Activated CD4-positive, alpha-beta T cell treated with anti-CD3 and anti-CD28 coated beads for 36 hours (primary cell): ENCODE measurements at regions of chr7 and their contacts with region 1.

Region 1: GRCh38 chr7:116809636-116810266 is 52.6 kb upstream of the CAPZA2 start:
- DNase-seq: no peak
- ATAC-seq: peak; percentile 69
- H3K4me3 Mint-ChIP-seq: no peak overlapping the region
- H3K27ac Mint-ChIP-seq: no peak overlapping the region
- H3K4me1 Mint-ChIP-seq: no peaks in the 10 kb centered on the region
- H3K27me3 Mint-ChIP-seq: peaks cover 3% of the 10 kb centered on the region

Region 2: DNA sequence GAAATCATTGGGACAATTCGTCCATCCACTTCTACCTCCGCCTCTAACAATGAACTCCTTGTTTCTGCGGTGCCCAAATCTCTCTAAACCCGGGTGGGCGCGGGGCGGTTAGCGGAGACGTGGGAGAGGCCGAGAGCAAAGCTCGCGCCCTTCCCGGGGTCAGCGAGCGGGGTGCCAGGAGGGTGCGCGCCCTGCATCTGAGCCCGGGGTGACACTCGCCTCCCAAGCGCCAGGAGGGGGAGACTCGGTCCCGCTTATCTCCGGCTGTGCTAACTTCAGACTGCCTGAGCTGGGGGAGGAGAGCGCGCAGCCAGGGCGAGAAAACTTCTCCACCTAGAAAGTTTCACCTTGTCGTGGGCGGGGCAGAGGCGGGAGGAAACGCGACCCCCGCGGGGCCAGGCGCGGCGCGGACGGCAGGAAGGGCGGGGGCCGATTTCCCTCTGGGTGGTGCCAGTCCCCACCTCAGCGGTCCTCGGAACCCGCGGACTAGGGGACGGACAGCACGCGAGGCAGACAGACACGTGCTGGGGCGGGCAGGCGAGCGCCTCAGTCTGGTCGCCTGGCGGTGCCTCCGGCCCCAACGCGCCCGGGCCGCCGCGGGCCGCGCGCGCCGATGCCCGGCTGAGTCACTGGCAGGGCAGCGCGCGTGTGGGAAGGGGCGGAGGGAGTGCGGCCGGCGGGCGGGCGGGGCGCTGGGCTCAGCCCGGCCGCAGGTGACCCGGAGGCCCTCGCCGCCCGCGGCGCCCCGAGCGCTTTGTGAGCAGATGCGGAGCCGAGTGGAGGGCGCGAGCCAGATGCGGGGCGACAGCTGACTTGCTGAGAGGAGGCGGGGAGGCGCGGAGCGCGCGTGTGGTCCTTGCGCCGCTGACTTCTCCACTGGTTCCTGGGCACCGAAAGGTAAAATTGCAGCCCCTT is 137.8 kb before region 1 on chr7 and contains the start of gene MET:
- CTCF ChIA-PET with region 1: interaction called, 3 read pairs
- POLR2A ChIA-PET with region 1: no interaction called
- intact Hi-C with region 1: loop called (anchors 1 to 2 kb)
- DNase-seq: peak; percentile 82
- ATAC-seq: peak; percentile 97
- H3K4me3 Mint-ChIP-seq: peak within 1 kb of the TSS; percentile 46
- H3K27ac Mint-ChIP-seq: no peak within 1 kb of the TSS
- H3K4me1 Mint-ChIP-seq: peaks cover 7% of the 10 kb centered on the region
- H3K27me3 Mint-ChIP-seq: peaks cover 47% of the 10 kb centered on the region
- total RNA-seq, gene MET: 0.63 to 0.91 TPM

Region 3: DNA sequence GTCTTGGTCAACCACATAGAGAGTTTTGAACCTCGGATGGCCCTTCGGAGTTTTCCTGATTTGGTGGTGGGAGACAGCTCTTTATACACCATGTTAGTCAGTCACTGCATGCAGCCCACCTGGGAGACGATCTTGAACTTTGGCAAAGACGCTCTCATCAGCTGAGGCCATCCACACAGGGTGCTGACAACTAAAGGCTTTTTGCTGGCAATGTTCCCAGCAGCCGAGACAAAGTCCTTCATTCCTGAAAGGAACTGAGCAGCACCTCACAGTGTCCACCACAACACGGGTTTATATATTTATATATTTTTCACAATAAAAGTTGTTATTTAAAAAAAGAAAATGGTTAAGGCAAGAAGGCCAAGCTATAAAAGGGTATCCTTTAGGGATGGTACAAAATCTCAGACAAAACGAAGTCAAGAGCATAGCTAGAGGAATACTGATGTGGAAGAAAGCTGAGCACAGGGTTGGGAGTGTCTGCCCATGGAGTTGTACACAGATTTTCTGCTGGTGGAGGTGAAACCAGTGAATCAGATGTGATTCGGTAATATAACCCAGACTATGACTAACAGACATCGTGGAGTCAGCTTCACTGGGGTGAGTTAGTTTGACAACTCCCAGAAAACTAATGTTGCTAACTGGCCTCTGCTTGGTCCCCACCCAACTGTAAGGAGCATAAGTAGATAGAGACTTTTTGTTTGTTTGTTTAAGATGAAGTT is 25.2 kb after region 1 on chr7:
- CTCF ChIA-PET with region 1: no interaction called
- POLR2A ChIA-PET with region 1: no interaction called
- intact Hi-C with region 1: loop called in 1 of 2 experiments (anchors 2 kb)
- DNase-seq: no peak
- ATAC-seq: peak; percentile 74
- H3K4me3 Mint-ChIP-seq: no peak overlapping the region
- H3K27ac Mint-ChIP-seq: no peak overlapping the region
- H3K4me1 Mint-ChIP-seq: no peaks in the 10 kb centered on the region
- H3K27me3 Mint-ChIP-seq: peaks cover 2% of the 10 kb centered on the region

Region 4: GRCh38 chr7:116871061-116871700 is 61.4 kb after region 1 on chr7:
- CTCF ChIA-PET with region 1: no interaction called
- POLR2A ChIA-PET with region 1: no interaction called
- intact Hi-C with region 1: no loop called
- DNase-seq: no peak
- ATAC-seq: no peak
- H3K4me3 Mint-ChIP-seq: no peak overlapping the region
- H3K27ac Mint-ChIP-seq: peak overlapping the region; percentile 84
- H3K4me1 Mint-ChIP-seq: peaks cover 76% of the 10 kb centered on the region
- H3K27me3 Mint-ChIP-seq: no peaks in the 10 kb centered on the region

Region 5: DNA sequence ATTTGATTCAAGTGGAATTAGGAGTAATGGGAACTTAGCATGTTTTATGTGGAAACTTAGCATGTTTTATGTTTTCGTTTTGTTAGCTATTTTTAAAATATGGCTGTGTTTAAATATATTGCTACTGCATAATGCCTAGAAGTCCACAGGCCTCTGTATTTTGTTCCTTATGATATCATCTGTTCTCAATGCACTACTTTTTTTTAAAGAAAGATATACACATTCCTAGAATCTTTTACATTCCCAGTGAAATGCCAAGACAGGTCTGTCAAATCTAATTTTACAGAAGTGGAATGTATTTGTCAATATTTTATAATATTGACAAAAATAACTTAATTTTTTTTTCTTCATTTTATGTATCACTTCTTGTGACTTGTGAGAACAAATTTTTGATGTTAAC is 195.1 kb after region 1 on chr7:
- CTCF ChIA-PET with region 1: no interaction called
- POLR2A ChIA-PET with region 1: no interaction called
- intact Hi-C with region 1: no loop called
- DNase-seq: no peak
- ATAC-seq: no peak
- H3K4me3 Mint-ChIP-seq: no peak overlapping the region
- H3K27ac Mint-ChIP-seq: no peak overlapping the region
- H3K4me1 Mint-ChIP-seq: peaks cover 42% of the 10 kb centered on the region
- H3K27me3 Mint-ChIP-seq: peaks cover 1% of the 10 kb centered on the region